Common myeloid progenitor, CD34-positive (primary cell): ENCODE measurements at regions of chr1 and their contacts with region 1.

Region 1: DNA sequence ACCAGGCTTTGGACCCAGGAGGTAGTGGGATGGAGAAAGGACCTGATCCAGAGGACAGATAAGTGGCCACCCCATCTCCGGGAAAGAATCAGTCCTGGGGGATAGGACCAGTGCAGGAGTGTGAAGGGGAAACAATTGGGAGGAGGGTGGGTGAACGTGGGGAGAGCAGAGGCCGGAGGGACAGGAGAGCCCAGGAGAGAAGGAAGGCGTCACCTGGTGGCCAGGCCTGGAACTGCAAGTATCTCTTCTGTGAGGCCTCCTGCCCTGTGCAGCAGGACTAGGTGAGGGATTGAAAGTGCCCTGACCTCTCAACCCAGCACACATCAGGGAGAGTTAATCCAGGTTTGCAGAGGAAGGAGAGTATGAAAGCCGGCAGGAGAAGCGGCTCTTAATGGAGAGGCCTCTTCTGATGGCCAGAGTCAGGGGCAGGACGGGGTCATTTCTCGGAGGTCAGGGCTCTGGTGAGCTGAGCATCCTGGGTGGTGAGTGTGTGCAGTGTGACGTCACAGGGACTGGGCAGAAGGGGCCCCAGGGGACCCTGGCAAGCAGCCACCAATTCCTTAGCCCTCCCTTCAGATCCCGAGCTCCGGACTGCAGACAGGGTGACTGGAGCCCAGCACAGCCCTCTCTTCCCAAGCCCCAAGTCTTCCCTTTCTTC is 9.2 kb upstream of the LAD1 start:
- DNase-seq: peak; percentile 64 to 75 (median 70)
- H3K4me3 ChIP-seq: no peak overlapping the region
- H3K27ac ChIP-seq: no peak overlapping the region
- H3K4me1 ChIP-seq: peaks cover 0 to 2% (median 0%) of the 10 kb centered on the region in 4 experiments
- H3K27me3 ChIP-seq: peaks cover 0 to 12% (median 6%) of the 10 kb centered on the region in 5 experiments

Region 2: DNA sequence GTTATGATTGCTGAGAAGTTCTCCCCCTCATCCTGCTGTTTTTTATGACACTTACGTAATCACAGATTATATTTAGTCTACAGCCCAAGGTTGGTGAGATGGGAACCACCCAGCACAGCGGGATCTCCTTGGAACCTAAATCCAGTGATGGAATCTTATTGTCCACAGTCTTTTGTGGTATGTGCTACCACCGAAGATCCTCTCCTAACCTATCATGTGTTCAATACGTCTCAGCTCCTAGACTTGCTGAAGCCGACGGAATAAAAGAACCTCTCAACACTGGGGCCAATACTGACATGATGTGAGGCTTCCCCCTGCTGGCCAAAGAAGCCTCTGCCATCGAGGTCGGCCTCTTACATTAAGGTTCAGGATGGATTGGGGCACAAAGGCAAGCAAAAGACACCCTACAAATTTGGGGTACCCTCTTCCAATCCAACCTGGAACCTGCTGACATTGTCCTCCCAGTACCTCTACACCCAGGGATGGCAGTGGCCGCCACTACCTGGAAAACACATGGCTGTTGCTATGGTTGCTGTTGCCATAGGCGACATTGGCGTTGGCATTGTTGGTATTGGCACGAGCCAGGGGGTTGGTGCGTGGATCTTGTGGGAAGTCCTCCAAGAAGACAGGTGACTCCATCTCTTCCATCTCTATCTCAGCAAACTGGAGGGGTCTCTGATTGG is 365.4 kb before region 1 on chr1:
- CTCF ChIA-PET with region 1: no interaction called
- POLR2A ChIA-PET with region 1: no interaction called
- DNase-seq: peak; percentile 71 to 88 (median 82)
- H3K4me3 ChIP-seq: no peak overlapping the region
- H3K27ac ChIP-seq: no peak overlapping the region
- H3K4me1 ChIP-seq: peaks cover 0 to 2% (median 0%) of the 10 kb centered on the region in 4 experiments
- H3K27me3 ChIP-seq: peaks cover 0 to 6% (median 3%) of the 10 kb centered on the region in 5 experiments

Region 3: GRCh38 chr1:201385299-201385891 is 22.9 kb before region 1 on chr1:
- CTCF ChIA-PET with region 1: interaction called, 27 read pairs
- POLR2A ChIA-PET with region 1: no interaction called
- DNase-seq: peak; percentile 30 to 61 (median 49)
- H3K4me3 ChIP-seq: no peak overlapping the region
- H3K27ac ChIP-seq: no peak overlapping the region
- H3K4me1 ChIP-seq: no peaks in the 10 kb centered on the region
- H3K27me3 ChIP-seq: peaks cover 0 to 5% (median 0%) of the 10 kb centered on the region in 5 experiments

Region 4: DNA sequence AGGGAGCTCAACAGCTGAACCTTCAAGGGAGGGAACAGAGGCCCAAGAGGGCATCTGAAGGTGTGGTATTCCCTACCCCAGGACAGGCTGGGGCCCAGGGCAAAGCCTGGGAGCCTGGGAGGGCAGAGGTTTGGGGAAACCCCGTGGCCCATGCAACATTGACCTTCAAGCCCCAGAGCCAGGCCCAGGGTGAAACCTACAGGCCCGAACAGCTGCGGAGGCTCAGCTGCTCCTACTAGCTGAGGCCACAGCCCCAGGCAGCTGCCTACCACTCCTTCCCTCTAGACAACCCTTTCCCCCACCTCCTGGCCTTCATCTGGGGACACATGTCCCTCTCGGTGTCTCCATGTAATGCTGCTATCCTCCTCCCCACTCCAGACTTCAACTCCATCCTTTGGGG is 12.4 kb before region 1 on chr1:
- CTCF ChIA-PET with region 1: interaction called, 24 read pairs
- POLR2A ChIA-PET with region 1: no interaction called
- DNase-seq: no peak
- H3K4me3 ChIP-seq: no peak overlapping the region
- H3K27ac ChIP-seq: no peak overlapping the region
- H3K4me1 ChIP-seq: peaks cover 0 to 10% (median 5%) of the 10 kb centered on the region in 4 experiments
- H3K27me3 ChIP-seq: peaks cover 4 to 42% (median 33%) of the 10 kb centered on the region in 5 experiments

Region 5: DNA sequence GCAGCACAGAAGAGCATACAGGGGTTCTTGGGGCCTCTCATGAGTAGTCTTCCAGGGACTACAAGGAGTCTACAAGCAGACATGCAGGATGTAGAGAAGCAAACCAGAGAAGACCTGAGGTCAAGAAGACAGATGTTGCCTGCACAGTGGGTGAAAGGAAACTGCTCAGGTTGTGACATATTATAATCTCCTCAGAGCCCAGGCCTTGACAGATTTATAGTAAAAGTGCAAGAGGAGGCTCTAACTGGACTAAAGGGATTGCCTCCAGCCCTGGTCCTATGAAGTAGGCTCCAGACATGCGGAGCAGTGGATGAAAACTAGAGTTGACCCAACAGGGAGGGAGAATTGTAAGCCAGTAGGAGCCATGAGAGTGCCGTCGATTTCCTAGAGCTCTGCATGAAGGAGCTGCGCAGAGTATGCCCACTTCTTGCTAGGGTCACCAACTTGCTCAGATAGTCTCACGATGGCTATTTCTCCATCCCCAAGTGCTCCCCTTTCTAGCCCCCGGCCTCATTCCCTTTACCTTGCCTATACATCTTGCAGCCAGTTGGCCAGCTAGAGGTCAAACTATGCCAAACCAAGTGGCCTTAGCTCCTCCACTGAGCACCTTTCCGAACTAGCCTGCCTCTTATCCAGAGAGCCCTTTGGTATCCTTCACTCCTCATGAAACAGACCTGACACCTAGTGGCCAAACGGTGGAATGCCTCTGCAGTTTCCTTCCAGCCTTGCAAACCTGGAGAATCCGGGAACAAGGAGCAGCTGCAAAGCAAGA is 384.4 kb after region 1 on chr1:
- CTCF ChIA-PET with region 1: no interaction called
- POLR2A ChIA-PET with region 1: no interaction called
- DNase-seq: peak; percentile 54 to 75 (median 69)
- H3K4me3 ChIP-seq: no peak overlapping the region
- H3K27ac ChIP-seq: no peak overlapping the region
- H3K4me1 ChIP-seq: peaks cover 2 to 33% (median 26%) of the 10 kb centered on the region in 4 experiments
- H3K27me3 ChIP-seq: no peaks in the 10 kb centered on the region